SK-N-SH (cell line): ENCODE measurements at regions of chr11 and their contacts with region 1.

Region 1: DNA sequence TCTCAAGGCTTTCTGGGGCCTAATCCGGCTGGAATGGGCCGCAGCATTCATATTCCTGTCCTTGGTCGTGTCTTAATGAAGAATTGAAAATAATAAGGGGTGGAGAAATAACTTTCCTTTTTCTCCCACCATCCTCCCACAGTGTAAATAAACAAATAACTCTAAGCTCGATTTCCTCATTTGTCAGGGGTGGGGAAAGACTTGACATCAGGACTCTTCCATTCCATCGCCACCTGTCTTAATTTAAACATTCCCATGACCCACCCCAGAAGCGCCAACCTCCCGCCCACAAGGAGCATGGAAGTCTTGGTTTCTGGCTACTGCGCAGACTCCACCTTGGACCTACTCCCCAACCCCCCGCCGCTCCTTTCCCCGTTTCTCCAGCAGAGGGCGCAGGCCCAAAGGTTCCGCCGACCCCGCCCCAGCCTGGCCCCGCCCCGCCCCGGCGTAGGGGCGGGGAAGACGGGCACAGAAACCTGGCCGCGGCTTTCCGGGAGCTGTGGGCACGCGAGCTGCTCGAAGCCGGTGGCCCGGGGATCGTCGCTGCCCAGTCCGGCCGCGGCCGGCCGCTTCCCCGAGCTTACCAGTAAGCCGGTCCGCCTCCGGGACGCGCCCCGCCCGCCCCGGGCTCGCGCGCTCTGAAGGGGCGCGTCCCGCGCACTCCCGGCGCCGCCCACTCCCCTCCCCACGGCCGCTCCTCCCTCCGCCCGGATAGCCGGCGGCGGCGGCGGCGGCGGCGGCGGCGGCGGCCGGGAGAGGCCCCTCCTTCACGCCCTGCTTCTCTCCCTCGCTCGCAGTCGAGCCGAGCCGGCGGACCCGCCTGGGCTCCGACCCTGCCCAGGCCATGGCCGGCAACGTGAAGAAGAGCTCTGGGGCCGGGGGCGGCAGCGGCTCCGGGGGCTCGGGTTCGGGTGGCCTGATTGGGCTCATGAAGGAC is at the start of gene CBL:
- DNase-seq: peak; percentile 98
- H3K4me3 ChIP-seq: peak within 1 kb of the TSS; percentile 78 to 99
- H3K27ac ChIP-seq: peak within 1 kb of the TSS; percentile 90
- H3K4me1 ChIP-seq: peaks cover 5 to 7% of the 10 kb centered on the region in 2 experiments; a peak in 3 of 4 replicates
- H3K27me3 ChIP-seq: no peaks in the 10 kb centered on the region
- CTCF ChIP-seq: peak; percentile 78
- EP300 ChIP-seq: peak in 1 of 2 experiments; percentile 46; a peak in 1 of 4 replicates
- RAD21 ChIP-seq: peak; percentile 57
- polyA plus RNA-seq, gene CBL: 9.5 and 10.4 TPM in 2 replicates

Region 2: GRCh38 chr11:119101759-119102423 is 104.0 kb before region 1 on chr11 and contains the start of gene DPAGT1:
- CTCF ChIA-PET with region 1: interaction called, 13 read pairs
- POLR2A ChIA-PET with region 1: no interaction called
- DNase-seq: peak; percentile 81
- H3K4me3 ChIP-seq: peak within 1 kb of the TSS; percentile 80 to 90
- H3K27ac ChIP-seq: peak within 1 kb of the TSS; percentile 93 to 97
- H3K4me1 ChIP-seq: peaks cover 13 to 29% of the 10 kb centered on the region in 2 experiments; a peak in 3 of 4 replicates
- H3K27me3 ChIP-seq: no peaks in the 10 kb centered on the region
- CTCF ChIP-seq: no peak
- EP300 ChIP-seq: no peak
- RAD21 ChIP-seq: no peak
- polyA plus RNA-seq, gene DPAGT1: 99.5 and 128 TPM in 2 replicates

Region 3: DNA sequence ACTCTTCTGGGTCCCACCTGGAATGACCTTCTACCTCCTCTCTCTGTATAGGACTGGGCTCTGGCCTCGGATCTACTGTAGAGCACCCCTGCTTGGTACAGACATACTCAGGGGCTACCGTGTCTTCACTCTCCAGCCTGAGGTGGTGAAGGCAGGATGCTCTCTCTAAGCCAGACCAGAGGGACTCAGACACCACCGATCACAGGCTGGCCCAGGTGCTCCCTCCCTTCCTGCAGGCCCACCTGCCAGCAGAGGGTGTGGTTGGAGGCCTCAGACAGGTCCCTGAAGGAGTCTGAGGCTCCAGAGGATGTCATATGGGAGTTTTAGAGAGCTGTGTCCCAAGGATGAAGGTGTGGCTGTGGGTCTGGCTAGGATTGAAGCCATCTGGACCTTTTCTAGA is 16.4 kb before region 1 on chr11:
- CTCF ChIA-PET with region 1: interaction called, 10 read pairs
- POLR2A ChIA-PET with region 1: no interaction called
- DNase-seq: peak; percentile 6
- H3K4me3 ChIP-seq: no peak overlapping the region
- H3K27ac ChIP-seq: no peak overlapping the region
- H3K4me1 ChIP-seq: peaks cover 0 to 9% of the 10 kb centered on the region in 2 experiments; a peak in 1 of 4 replicates
- H3K27me3 ChIP-seq: no peaks in the 10 kb centered on the region
- CTCF ChIP-seq: no peak
- EP300 ChIP-seq: no peak
- RAD21 ChIP-seq: no peak

Region 4: DNA sequence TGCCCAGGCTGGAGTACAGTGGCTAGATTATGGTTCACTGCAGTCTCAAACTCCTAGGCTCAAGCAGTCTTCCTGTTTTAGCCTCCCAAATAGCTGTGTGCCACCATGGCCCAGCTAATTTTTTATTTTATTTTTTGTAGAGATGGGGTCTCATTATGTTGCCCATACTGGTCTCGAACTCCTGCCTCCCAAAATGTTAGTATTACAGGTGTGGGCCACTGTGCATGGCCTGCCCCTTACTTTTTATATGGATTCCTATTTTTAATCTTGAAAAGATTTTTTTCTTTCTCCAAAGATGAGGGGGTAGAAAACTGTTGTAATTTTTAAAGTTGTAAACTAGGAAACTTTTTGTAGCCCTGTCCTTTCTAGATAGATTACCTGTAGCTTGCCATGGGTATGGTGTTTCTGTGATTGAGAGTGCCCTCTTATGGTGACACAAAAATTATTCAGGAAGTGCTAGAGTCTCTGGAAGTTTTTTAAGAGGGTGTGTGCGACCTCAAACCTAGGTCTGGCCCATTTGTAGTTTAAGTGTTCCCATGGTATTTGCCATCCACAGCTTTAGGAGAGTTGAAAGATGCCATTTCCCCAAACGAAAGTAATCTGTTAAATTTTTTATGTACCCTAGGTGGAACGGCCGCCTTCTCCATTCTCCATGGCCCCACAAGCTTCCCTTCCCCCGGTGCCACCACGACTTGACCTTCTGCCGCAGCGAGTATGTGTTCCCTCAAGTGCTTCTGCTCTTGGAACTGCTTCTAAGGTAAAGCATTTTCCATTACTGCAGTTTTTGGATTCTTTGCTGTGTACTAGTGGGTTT is 78.7 kb after region 1 on chr11:
- CTCF ChIA-PET with region 1: interaction called, 13 read pairs
- POLR2A ChIA-PET with region 1: no interaction called
- DNase-seq: peak; percentile 36
- H3K4me3 ChIP-seq: no peak overlapping the region
- H3K27ac ChIP-seq: no peak overlapping the region
- H3K4me1 ChIP-seq: no peaks in the 10 kb centered on the region
- H3K27me3 ChIP-seq: no peaks in the 10 kb centered on the region
- CTCF ChIP-seq: peak; percentile 63
- EP300 ChIP-seq: no peak
- RAD21 ChIP-seq: peak; percentile 71

Region 5: DNA sequence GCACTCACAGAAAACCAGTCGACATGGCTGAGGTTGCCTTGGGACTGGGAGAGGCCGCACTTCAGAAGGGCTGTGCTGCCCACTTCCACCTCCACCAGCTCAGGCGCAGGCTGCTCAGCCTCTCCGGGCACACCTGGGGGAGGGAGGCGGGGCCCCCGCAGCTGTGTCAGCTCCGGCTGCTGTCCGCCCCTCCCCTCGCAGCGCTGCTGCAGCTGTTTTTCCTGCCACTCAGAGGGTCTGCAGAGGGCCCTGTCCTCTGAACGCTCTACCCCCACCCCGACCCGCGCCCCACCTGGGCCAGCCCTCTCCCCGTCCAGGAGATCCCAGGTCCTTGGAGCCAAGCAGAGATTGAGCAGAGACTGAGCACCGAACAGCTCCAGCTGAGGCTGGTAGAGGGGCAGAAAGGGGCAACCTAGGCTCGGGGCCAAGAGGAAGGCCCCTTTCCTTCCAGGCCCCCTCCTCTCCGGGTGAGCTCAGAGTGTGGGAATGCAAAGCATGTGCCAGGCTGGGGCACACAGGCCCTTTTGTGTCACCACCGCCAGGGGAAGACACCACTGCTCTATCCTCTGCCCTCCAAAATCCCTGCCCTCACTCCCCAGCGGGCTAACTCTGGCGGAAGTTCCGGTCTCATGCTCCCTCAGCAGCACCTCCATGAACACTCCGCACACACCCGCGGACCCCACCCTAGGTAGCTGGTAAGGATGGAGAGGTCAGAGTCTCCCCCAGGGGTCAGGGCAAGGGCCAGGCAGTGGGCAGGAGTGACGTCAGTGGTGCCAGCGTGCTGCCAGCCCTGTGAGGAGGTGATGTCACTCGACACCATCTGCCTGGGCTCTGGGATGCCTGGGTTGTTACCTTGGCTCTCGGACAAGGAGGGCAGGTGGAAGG is 109.5 kb after region 1 on chr11:
- CTCF ChIA-PET with region 1: interaction called, 18 read pairs
- POLR2A ChIA-PET with region 1: interaction called, 5 read pairs
- DNase-seq: peak; percentile 72
- H3K4me3 ChIP-seq: peak overlapping the region; percentile 55 to 68; a peak in 3 of 4 replicates
- H3K27ac ChIP-seq: no peak overlapping the region
- H3K4me1 ChIP-seq: peaks cover 12 to 31% of the 10 kb centered on the region in 2 experiments; a peak in 2 of 4 replicates
- H3K27me3 ChIP-seq: no peaks in the 10 kb centered on the region
- CTCF ChIP-seq: peak; percentile 19; the same call in 1 of the 2 replicates
- EP300 ChIP-seq: no peak
- RAD21 ChIP-seq: no peak

Region 6: GRCh38 chr11:119373921-119374631 is 168.2 kb after region 1 on chr11:
- CTCF ChIA-PET with region 1: interaction called, 11 read pairs
- POLR2A ChIA-PET with region 1: no interaction called
- DNase-seq: peak; percentile 84
- H3K4me3 ChIP-seq: peak overlapping the region in 1 of 2 experiments; percentile 27; a peak in 2 of 4 replicates
- H3K27ac ChIP-seq: peak overlapping the region in 1 of 2 experiments; percentile 98; a peak in 2 of 4 replicates
- H3K4me1 ChIP-seq: peaks cover 9 to 94% of the 10 kb centered on the region in 2 experiments
- H3K27me3 ChIP-seq: no peaks in the 10 kb centered on the region
- CTCF ChIP-seq: peak; percentile 88
- EP300 ChIP-seq: peak in 1 of 2 experiments; percentile 26; a peak in 1 of 4 replicates
- RAD21 ChIP-seq: peak; percentile 96